Spleen (tissue), 13 donors: ENCODE measurements at regions of chr20 and their contacts with region 1.

Region 1: GRCh38 chr20:35994994-35995453 is 26.6 kb downstream of the CNBD2 start:
- DNase-seq: peak; percentile 93
- H3K4me3 ChIP-seq: no peak overlapping the region
- H3K27ac ChIP-seq: no peak overlapping the region
- H3K4me1 ChIP-seq: peaks cover 0 to 14% (median 5%) of the 10 kb centered on the region in 6 donors
- H3K27me3 ChIP-seq: no peaks in the 10 kb centered on the region
- CTCF ChIP-seq: peak; percentile 53 to 88 (median 82)
- POLR2A ChIP-seq: no peak

Region 2: GRCh38 chr20:35463455-35464300 is 531.3 kb before region 1 on chr20:
- intact Hi-C with region 1: no loop called
- DNase-seq: no peak
- H3K4me3 ChIP-seq: no peak overlapping the region
- H3K27ac ChIP-seq: no peak overlapping the region
- H3K4me1 ChIP-seq: peaks cover 0 to 23% (median 3%) of the 10 kb centered on the region in 6 donors
- H3K27me3 ChIP-seq: no peaks in the 10 kb centered on the region
- CTCF ChIP-seq: peak; percentile 75 to 90 (median 82)
- POLR2A ChIP-seq: no peak

Region 3: GRCh38 chr20:36144336-36144735 is 149.3 kb after region 1 on chr20:
- intact Hi-C with region 1: loop called (anchors 2 kb)
- DNase-seq: no peak
- H3K4me3 ChIP-seq: no peak overlapping the region
- H3K27ac ChIP-seq: no peak overlapping the region
- H3K4me1 ChIP-seq: peaks cover 0 to 25% (median 6%) of the 10 kb centered on the region in 6 donors
- H3K27me3 ChIP-seq: no peaks in the 10 kb centered on the region
- CTCF ChIP-seq: no peak
- POLR2A ChIP-seq: no peak